Calu3 (cell line): ENCODE measurements at regions of chr2 and their contacts with region 1.

Region 1: DNA sequence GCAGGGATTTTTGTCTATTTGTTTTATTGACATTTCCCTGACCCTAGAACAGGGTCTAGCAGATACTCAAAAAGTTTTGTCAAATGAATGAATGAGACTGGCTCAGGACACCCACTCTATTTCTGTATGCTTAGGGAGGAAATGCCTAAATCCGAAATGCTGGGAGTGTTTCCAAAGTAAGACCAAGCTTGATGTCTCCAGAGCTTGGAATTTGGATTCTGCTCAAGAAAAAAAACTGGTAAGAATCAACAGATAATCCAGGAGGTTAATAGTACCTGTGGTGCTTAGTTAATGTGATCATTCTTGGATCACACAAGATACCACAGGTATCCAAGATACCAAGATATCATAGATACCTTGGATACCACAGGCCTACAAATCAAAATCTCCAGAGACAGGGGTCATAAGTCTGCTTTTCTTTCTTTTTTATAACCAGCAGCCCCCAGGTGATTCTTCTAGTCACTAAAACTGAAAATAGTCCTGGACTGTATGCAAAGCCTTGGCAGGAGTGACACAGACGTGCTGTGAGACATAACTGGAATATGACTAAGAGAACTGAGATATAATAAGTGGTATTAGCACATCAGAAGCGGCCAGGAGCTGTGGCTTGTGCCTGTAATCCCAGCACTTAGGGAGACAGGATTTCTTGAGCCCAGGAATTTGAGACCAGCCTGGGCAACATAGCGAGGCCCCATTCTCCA is 39.9 kb upstream of the SP3 start:
- DNase-seq: no peak
- H3K4me3 Mint-ChIP-seq: no peak overlapping the region
- H3K27ac Mint-ChIP-seq: no peak overlapping the region
- H3K4me1 Mint-ChIP-seq: peaks cover 25% of the 10 kb centered on the region
- H3K27me3 Mint-ChIP-seq: no peaks in the 10 kb centered on the region
- CTCF ChIP-seq: no peak

Region 2: GRCh38 chr2:173884025-173884802 is 120.8 kb before region 1 on chr2:
- CTCF ChIA-PET with region 1: no interaction called
- intact Hi-C with region 1: loop called (anchors 1 kb)
- DNase-seq: peak; percentile 58
- H3K4me3 Mint-ChIP-seq: no peak overlapping the region
- H3K27ac Mint-ChIP-seq: no peak overlapping the region
- H3K4me1 Mint-ChIP-seq: no peaks in the 10 kb centered on the region
- H3K27me3 Mint-ChIP-seq: no peaks in the 10 kb centered on the region
- CTCF ChIP-seq: no peak

Region 3: DNA sequence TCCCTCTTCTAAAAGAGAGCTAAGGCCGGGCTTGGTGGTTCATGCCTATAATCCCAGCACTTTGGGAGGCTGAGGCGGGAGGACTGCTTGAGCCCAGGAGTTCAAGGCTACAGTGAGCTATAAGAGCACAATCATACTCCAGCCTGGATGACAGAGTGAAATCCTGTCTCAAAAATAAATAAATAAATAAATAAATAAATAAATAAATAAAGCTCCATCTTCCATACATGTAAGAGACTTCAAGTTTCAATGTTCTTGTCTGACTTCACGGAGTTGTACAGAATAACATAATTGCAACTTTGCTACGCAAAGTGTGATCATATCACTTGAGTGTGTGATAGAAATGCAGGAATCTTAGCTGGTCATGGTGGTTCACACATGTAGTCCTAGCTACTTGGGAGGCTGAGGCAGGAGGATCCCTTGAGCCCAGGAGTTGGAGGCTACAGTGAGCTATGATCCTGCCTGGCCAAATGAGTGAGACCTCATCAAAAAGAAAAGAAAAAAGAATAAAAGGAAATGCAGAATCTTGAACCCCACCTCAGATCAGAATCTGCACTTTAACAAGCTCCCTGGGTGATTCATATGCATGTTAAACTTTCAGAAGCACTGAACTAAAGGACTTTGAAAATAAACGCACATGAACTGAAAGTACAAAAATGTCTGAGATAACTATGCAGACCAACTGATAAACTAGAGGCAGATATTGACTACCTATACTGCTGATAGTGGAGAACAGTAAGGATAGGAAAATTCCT is 83.8 kb after region 1 on chr2:
- CTCF ChIA-PET with region 1: no interaction called
- intact Hi-C with region 1: no loop called
- DNase-seq: no peak
- H3K4me3 Mint-ChIP-seq: no peak overlapping the region
- H3K27ac Mint-ChIP-seq: no peak overlapping the region
- H3K4me1 Mint-ChIP-seq: no peaks in the 10 kb centered on the region
- H3K27me3 Mint-ChIP-seq: no peaks in the 10 kb centered on the region
- CTCF ChIP-seq: no peak

Region 4: GRCh38 chr2:175755169-175755568 is 1750.1 kb after region 1 on chr2:
- CTCF ChIA-PET with region 1: no interaction called
- intact Hi-C with region 1: no loop called
- DNase-seq: no peak
- H3K4me3 Mint-ChIP-seq: no peak overlapping the region
- H3K27ac Mint-ChIP-seq: no peak overlapping the region
- H3K4me1 Mint-ChIP-seq: no peaks in the 10 kb centered on the region
- H3K27me3 Mint-ChIP-seq: no peaks in the 10 kb centered on the region
- CTCF ChIP-seq: no peak